ENCODE measurements at regions of chr20 and their contacts with region 1.

Region 1: DNA sequence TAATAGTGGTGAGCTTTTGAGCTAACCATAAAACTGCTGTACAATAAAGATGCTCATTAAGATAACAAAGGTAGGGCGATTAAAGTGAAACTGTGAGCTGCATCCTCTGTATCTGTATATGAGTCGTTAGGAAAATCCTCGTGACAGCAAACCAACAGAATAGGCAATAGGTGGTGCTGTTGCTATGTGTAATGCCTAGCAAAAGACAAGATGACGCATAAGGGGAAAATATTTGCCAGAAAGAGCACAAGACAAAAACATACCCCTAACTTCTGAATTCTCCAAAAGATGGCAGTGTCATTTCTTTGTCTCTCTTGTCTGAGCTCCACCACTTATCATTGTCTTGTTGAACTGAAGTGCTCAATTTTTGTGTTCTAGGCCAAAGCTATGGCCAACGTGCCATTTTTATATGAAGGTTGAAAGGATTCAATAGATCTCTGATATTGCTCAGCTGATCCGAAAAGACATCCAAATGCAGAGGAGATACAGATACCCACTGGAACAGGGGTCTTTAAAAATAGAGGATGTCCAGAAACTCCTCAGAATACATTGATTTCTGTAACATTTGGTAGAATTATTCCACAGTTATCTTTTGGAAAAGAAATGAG is 56.3 kb upstream of the ANKEF1 start:
- DNase-seq: peak; percentile 87
- H3K4me3 ChIP-seq: no peak overlapping the region
- H3K27ac ChIP-seq: no peak overlapping the region
- H3K4me1 ChIP-seq: peaks cover 8% of the 10 kb centered on the region
- H3K27me3 ChIP-seq: peaks cover 1 to 6% of the 10 kb centered on the region in 2 experiments
- CTCF ChIP-seq: peak; percentile 65 to 68
- POLR2A ChIP-seq: no peak

Region 2: GRCh38 chr20:10090588-10091166 is 112.2 kb after region 1 on chr20:
- CTCF ChIA-PET with region 1: interaction called, 370 read pairs
- POLR2A ChIA-PET with region 1: no interaction called
- dilution Hi-C with region 1: no loop called
- intact Hi-C with region 1: loop called (anchors 1 kb)
- DNase-seq: peak; percentile 67
- H3K4me3 ChIP-seq: no peak overlapping the region
- H3K27ac ChIP-seq: no peak overlapping the region
- H3K4me1 ChIP-seq: no peaks in the 10 kb centered on the region
- H3K27me3 ChIP-seq: no peaks in the 10 kb centered on the region
- CTCF ChIP-seq: peak; percentile 69 to 78
- POLR2A ChIP-seq: no peak

Region 3: DNA sequence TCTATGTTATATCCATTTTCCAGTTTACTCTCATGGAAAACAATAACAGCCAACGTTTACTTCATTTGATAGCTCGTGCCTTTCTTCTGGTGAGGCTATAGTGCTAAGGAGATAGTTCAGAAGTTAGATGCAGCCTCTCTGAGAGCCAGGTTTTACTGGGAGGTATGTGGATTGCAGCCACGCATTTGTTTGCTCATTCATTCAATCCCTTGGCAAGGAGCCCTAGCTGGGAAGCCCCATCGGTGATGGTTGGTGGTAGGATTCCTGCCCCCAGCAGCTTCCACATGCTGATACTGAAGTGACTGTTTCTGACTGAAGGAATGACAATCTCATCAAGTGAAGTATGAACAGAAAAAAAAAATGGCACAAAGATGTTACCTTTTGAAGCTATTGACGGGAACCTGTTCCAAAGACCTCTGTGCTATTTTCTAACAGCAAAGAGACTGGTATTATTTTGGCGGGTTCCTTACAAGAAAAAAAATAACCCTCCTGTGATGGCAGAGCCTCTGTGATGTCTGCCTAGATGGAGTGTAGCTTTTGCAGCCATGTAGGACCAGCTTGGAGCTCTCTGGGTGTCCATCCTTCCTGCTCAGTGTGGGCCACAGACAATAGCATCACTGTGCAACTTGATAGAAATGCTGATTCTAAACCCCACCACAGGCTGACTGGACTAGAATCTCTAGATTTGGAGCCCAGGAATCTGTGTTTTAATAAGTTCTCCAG is 270.7 kb after region 1 on chr20:
- CTCF ChIA-PET with region 1: no interaction called
- POLR2A ChIA-PET with region 1: no interaction called
- dilution Hi-C with region 1: no loop called
- intact Hi-C with region 1: no loop called
- DNase-seq: no peak
- H3K4me3 ChIP-seq: no peak overlapping the region
- H3K27ac ChIP-seq: no peak overlapping the region
- H3K4me1 ChIP-seq: no peaks in the 10 kb centered on the region
- H3K27me3 ChIP-seq: peaks cover 0 to 2% of the 10 kb centered on the region in 2 experiments
- CTCF ChIP-seq: no peak
- POLR2A ChIP-seq: no peak

Region 4: GRCh38 chr20:10357974-10358373 is 379.5 kb after region 1 on chr20:
- CTCF ChIA-PET with region 1: interaction called, 18 read pairs
- POLR2A ChIA-PET with region 1: no interaction called
- dilution Hi-C with region 1: no loop called
- intact Hi-C with region 1: loop called (anchors 1 kb)
- DNase-seq: peak; percentile 37
- H3K4me3 ChIP-seq: no peak overlapping the region
- H3K27ac ChIP-seq: peak overlapping the region; percentile 45
- H3K4me1 ChIP-seq: peaks cover 44% of the 10 kb centered on the region
- H3K27me3 ChIP-seq: no peaks in the 10 kb centered on the region
- CTCF ChIP-seq: peak; percentile 13 to 25
- POLR2A ChIP-seq: no peak

Region 5: DNA sequence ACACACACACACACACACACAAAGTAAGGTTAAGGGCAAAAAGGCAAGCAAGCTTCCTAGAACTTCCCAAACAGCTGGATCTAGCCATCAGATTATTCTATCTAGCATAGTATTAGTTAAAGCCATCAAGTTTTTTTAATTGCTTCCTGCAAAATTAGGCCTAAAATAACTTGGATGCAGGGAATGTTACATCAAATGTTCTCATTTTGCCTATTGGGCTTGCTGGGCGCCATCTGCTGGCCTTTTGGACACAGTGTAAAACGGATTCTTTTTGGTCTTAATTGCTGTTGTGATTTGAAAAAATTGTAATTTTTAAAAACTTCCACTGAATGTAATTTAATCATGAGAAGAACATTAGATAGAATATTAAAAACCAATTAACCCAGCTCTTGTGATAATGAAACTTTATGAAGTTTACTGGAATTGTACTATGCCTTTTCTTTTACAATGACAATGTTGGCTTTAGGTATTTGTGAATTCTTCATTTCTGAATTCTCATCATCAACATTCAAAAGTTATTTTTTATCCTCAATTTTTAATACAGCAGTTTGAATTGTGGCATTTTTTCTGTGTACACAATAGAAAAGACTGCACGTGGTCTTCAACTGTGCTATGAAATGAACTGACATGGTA is 448.7 kb after region 1 on chr20:
- CTCF ChIA-PET with region 1: interaction called, 74 read pairs
- POLR2A ChIA-PET with region 1: no interaction called
- dilution Hi-C with region 1: no loop called
- intact Hi-C with region 1: loop called (anchors 1 kb)
- DNase-seq: peak; percentile 79
- H3K4me3 ChIP-seq: no peak overlapping the region
- H3K27ac ChIP-seq: no peak overlapping the region
- H3K4me1 ChIP-seq: peaks cover 8% of the 10 kb centered on the region
- H3K27me3 ChIP-seq: no peaks in the 10 kb centered on the region
- CTCF ChIP-seq: peak; percentile 66 to 79
- POLR2A ChIP-seq: no peak

Region 6: GRCh38 chr20:10536531-10536930 is 558.0 kb after region 1 on chr20:
- CTCF ChIA-PET with region 1: interaction called, 16 read pairs
- POLR2A ChIA-PET with region 1: no interaction called
- dilution Hi-C with region 1: no loop called
- intact Hi-C with region 1: loop called (anchors 1 kb)
- DNase-seq: peak; percentile 41
- H3K4me3 ChIP-seq: no peak overlapping the region
- H3K27ac ChIP-seq: no peak overlapping the region
- H3K4me1 ChIP-seq: peaks cover 18% of the 10 kb centered on the region
- H3K27me3 ChIP-seq: no peaks in the 10 kb centered on the region
- CTCF ChIP-seq: peak; percentile 49 to 57
- POLR2A ChIP-seq: no peak

Region 7: GRCh38 chr20:11544029-11544678 is 1565.7 kb after region 1 on chr20:
- CTCF ChIA-PET with region 1: interaction called, 12 read pairs
- POLR2A ChIA-PET with region 1: no interaction called
- dilution Hi-C with region 1: no loop called
- intact Hi-C with region 1: loop called (anchors 1 kb)
- DNase-seq: peak; percentile 74
- H3K4me3 ChIP-seq: no peak overlapping the region
- H3K27ac ChIP-seq: no peak overlapping the region
- H3K4me1 ChIP-seq: peaks cover 9% of the 10 kb centered on the region
- H3K27me3 ChIP-seq: no peaks in the 10 kb centered on the region
- CTCF ChIP-seq: peak; percentile 16 to 44
- POLR2A ChIP-seq: no peak